WTC11 (cell line): ENCODE measurements at regions of chr2 and their contacts with region 1.

Region 1: DNA sequence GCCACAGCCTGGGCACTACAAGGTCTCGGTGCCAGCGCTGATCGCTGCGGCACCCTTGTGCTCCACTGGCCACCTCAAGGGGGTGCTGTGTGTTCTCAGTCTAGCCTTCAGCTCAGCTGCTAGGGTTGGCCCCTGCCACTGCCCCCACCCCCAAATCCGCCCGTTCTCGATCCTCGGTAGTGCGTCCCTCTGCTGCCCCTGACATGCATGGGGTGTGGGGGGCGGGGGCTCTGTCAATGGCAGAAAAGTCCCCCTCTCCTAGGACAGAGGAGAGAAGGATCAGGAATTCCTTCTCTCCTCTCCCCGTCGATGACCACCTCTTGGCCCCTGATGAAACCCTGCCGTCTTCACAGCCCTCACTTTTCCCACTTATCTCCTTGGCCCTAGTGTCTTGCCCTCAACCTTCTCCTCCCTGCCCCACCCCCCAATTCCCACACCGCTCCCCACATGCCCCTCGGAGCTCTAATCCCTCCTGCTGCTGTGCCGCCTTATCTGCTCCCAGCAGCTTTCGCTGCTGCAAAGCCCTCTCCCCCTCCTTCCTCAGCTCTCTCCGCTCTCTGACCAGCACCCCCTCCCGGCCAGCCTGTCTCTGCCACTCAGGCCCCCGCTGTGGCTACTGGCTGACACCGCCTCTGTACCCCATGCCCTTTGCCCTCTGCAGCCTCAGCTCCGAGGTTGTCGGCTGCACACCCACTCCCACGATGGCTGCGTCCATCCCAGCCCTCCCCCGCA is 4.3 kb upstream of the ASIC4 start:
- DNase-seq: peak; percentile 82
- ATAC-seq: peak; percentile 57
- H3K4me3 Mint-ChIP-seq: peak overlapping the region; percentile 72
- H3K27ac Mint-ChIP-seq: no peak overlapping the region
- H3K4me1 Mint-ChIP-seq: peaks cover 70% of the 10 kb centered on the region
- H3K27me3 Mint-ChIP-seq: peaks cover 41% of the 10 kb centered on the region
- CTCF ChIP-seq: peak; percentile 31

Region 2: DNA sequence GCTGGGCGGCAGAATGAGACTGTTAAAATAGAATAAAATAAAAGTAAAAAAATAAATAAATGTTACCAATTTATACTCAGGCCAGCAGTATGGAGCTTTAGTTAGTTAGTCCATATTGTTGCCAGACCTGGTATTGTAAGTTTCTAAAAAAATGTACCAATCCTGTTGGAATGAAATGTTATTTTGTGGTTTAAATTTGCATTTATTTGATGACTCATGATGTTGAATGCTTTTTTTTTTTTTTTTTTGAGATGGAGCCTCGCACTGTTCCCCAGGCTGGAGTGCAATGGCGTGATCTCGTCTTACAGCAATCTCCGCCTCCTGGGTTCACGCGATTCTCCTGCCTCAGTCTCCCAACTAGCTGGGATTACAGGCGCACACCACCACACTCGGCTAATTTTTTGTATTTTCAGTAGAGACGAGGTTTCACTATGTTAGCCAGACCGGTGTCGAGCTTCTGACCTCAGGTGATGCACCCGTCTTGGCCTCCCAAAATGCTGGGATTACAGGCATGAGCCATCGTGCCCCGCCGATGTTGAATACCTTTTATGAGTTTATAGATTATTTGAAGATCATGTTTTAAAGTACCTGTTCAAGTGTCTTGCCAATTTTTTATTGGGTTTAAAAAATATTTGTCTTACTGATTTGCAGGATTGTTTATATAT is 195.0 kb before region 1 on chr2:
- CTCF ChIA-PET with region 1: no interaction called
- POLR2A ChIA-PET with region 1: no interaction called
- DNase-seq: no peak
- ATAC-seq: no peak
- H3K4me3 Mint-ChIP-seq: no peak overlapping the region
- H3K27ac Mint-ChIP-seq: no peak overlapping the region
- H3K4me1 Mint-ChIP-seq: peaks cover 15% of the 10 kb centered on the region
- H3K27me3 Mint-ChIP-seq: peaks cover 12% of the 10 kb centered on the region
- CTCF ChIP-seq: no peak

Region 3: DNA sequence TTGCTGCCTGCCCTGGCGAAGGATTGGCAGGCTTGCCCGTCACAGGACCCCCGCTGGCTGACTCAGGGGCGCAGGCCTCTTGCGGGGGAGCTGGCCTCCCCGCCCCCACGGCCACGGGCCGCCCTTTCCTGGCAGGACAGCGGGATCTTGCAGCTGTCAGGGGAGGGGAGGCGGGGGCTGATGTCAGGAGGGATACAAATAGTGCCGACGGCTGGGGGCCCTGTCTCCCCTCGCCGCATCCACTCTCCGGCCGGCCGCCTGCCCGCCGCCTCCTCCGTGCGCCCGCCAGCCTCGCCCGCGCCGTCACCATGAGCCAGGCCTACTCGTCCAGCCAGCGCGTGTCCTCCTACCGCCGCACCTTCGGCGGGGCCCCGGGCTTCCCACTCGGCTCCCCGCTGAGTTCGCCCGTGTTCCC is 91.8 kb before region 1 on chr2 and contains the start of gene DES:
- CTCF ChIA-PET with region 1: interaction called, 15 read pairs
- POLR2A ChIA-PET with region 1: no interaction called
- DNase-seq: no peak
- ATAC-seq: no peak
- H3K4me3 Mint-ChIP-seq: peak within 1 kb of the TSS; percentile 37
- H3K27ac Mint-ChIP-seq: no peak within 1 kb of the TSS
- H3K4me1 Mint-ChIP-seq: peaks cover 28% of the 10 kb centered on the region
- H3K27me3 Mint-ChIP-seq: peaks cover 38% of the 10 kb centered on the region
- CTCF ChIP-seq: no peak
- total RNA-seq, gene DES: 1.6 to 3.5 TPM (median 2.8 TPM) in 3 replicates

Region 4: DNA sequence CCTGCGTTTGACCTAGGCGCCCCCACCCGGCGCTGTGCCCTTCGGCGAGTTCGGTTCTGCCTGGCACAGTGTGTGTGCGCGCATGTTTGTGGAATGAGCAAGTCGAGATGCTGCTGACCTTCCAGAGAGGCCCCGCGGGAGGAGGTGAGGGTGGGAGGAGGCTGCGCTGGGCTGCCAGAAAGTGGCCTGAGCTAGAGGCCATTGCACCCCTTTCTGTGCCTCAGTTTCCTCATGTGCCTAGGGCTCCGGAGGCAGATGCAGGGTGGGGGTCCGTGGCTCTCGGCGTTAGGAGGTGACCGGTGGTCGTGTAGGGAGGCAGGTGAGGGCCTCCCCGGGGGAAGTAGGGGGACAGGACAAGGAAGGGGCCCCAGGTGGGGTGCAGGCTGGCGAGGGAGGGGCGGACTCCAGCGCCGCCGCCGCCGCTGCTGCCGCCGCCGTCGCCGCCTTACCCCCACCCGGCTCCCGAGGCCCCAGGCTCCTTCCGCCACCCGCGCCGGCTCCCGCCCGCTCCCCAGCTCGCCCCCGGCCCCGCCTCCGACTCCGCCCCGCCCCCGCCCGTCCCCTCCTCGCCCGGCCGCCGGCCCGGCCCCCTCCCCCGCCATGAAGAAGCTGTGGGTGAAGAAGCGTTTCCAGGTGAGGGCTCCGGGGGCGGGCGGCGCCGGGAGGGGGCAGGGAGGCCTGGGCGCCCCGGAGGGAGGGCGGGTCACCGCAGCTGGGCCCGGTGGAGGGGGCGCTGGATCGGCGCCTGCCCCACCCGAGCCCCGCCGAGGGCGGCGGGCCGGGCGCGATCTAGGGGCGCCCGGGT is 68.3 kb before region 1 on chr2:
- CTCF ChIA-PET with region 1: interaction called, 20 read pairs
- POLR2A ChIA-PET with region 1: no interaction called
- DNase-seq: peak; percentile 62
- ATAC-seq: peak; percentile 60
- H3K4me3 Mint-ChIP-seq: peak overlapping the region; percentile 82
- H3K27ac Mint-ChIP-seq: no peak overlapping the region
- H3K4me1 Mint-ChIP-seq: peaks cover 27% of the 10 kb centered on the region
- H3K27me3 Mint-ChIP-seq: peaks cover 22% of the 10 kb centered on the region
- CTCF ChIP-seq: no peak

Region 5: DNA sequence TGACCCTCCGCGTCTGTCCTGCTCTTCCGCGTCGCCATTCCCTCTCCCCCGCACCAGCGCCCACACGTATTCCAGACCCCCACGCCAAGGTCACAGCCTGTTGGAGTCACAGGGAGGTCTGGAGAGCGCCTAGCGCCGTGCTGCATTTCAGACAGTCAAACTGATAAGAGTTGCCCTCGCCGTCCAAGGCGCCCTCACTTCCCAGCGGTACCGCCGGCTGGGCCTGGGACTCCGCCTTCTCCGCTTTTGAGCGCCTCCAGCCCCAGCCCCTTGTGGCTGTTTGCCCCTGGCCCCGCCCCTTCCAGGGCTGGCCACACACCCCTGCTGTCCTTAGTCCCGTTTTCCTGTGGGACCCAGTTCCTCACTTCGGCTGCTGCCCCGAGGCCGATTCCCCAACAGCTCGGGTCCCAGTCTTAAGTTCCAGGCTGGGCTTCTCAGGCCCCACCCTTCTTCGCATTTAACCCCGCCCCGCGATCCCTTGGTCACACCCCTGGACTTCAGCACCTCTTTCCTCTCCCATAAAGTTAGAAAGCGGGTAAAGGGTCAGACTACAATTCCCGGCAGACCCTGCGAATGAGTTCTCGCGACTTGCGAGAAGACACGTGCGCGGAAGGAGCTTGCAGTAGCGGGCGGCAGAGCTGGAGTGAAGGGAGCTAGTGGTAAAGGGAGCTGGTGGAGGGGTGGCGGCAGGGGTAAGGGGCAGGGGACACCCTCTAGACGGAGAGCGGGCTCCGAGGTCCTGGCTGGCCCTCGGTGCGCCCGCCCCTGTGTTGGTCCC is 11.5 kb before region 1 on chr2 and contains the start of gene GMPPA:
- CTCF ChIA-PET with region 1: interaction called, 2,316 read pairs
- POLR2A ChIA-PET with region 1: interaction called, 19 read pairs
- DNase-seq: peak; percentile 98
- ATAC-seq: peak; percentile 84
- H3K4me3 Mint-ChIP-seq: peak within 1 kb of the TSS; percentile 98
- H3K27ac Mint-ChIP-seq: peak within 1 kb of the TSS; percentile 99
- H3K4me1 Mint-ChIP-seq: peaks cover 52% of the 10 kb centered on the region
- H3K27me3 Mint-ChIP-seq: peaks cover 45% of the 10 kb centered on the region
- CTCF ChIP-seq: no peak
- total RNA-seq, gene GMPPA: 44.2 to 51.9 TPM (median 49.5 TPM) in 3 replicates

Region 6: GRCh38 chr2:219530048-219530963 is 20.4 kb after region 1 on chr2:
- CTCF ChIA-PET with region 1: interaction called, 188 read pairs
- POLR2A ChIA-PET with region 1: interaction called, 4 read pairs
- DNase-seq: peak; percentile 92
- ATAC-seq: peak; percentile 75
- H3K4me3 Mint-ChIP-seq: peak overlapping the region; percentile 60
- H3K27ac Mint-ChIP-seq: no peak overlapping the region
- H3K4me1 Mint-ChIP-seq: peaks cover 30% of the 10 kb centered on the region
- H3K27me3 Mint-ChIP-seq: peaks cover 56% of the 10 kb centered on the region
- CTCF ChIP-seq: peak; percentile 88

Region 7: GRCh38 chr2:219543601-219544358 is 33.8 kb after region 1 on chr2 and contains the starts of genes CHPF and TMEM198:
- CTCF ChIA-PET with region 1: interaction called, 11 read pairs
- POLR2A ChIA-PET with region 1: interaction called, 3 read pairs
- DNase-seq: peak; percentile 99
- ATAC-seq: peak; percentile 84
- H3K4me3 Mint-ChIP-seq: peak within 1 kb of the TSS; percentile 86
- H3K27ac Mint-ChIP-seq: no peak within 1 kb of the TSS
- H3K4me1 Mint-ChIP-seq: peaks cover 18% of the 10 kb centered on the region
- H3K27me3 Mint-ChIP-seq: peaks cover 28% of the 10 kb centered on the region
- CTCF ChIP-seq: no peak
- total RNA-seq, gene CHPF: 84.3 to 97.0 TPM (median 84.8 TPM) in 3 replicates
- total RNA-seq, gene TMEM198: 7.1 to 8.1 TPM (median 7.3 TPM) in 3 replicates